ENCODE measurements at regions of chr4 and their contacts with region 1.

Region 1: DNA sequence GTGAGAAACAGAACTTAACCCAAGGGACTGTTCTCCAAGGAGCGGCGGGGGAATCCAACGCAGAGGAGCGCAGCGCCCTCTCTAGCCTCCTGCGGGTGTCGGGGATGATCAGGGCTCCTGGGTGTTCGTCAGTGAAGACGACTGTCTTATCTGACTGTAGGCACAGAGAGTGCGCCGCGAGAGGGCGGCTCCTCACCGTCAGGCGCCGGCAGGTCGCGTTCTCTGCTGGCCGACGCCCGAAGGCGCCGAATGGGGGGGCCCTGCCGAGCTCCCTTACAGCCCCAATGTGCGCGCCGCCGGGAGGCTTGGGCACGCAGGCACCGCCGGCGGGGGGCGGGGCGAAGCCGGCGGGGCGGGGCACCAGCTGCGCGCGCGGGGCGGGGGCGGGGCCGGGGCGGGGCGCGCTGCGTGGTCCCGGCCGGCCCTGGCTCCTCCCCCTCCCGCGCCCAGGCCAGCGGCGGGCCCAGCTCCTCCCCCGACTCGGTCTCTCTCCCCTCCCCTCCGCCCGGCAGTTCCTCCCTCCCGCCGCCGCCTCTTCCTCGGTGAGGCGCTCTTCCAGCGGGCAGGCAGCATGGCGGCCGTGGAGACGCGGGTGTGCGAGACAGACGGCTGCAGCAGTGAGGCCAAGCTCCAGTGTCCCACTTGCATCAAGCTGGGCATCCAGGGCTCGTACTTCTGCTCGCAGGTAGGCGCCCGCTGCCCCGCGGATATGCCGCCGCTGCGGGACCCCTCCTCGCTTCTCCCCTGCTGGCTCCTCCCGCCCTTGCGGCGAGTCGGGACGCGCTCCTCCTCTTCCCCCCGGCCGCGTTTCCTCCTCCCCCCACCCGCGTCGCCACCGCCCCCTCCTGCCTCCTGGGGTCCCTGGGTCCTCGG is at the start of gene METAP1:
- DNase-seq: peak; percentile 82 to 97 (median 93)

Region 2: DNA sequence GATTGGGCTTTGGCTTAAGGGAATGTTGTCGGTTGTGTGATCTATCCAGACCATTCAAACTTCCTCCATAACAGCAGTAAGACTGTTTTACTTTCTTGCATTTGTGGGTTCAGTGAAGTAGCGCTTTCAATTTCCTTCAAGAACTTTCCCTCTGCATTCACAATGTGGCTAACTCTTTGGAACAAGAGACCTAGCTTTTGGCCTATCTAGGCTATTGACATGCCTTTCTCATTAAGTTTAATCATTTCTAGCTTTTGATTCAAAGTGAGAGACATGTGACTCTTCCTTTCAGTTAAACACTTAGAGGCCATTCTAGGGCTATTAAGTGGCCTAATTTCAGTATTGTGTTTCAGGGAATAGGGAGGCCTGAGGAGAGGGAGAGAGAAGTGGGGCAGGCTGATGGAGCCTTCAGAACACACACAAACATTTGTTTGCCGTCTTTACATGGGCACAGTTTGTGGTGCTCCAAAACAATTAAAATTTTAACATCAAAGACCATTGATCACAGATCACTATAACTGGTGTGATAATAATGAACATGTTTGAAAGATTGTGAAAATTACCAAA is 59.1 kb after region 1 on chr4:
- intact Hi-C with region 1: loop called (anchors 5 kb)
- DNase-seq: no peak